ENCODE measurements at regions of chr6 and their contacts with region 1.

Region 1: DNA sequence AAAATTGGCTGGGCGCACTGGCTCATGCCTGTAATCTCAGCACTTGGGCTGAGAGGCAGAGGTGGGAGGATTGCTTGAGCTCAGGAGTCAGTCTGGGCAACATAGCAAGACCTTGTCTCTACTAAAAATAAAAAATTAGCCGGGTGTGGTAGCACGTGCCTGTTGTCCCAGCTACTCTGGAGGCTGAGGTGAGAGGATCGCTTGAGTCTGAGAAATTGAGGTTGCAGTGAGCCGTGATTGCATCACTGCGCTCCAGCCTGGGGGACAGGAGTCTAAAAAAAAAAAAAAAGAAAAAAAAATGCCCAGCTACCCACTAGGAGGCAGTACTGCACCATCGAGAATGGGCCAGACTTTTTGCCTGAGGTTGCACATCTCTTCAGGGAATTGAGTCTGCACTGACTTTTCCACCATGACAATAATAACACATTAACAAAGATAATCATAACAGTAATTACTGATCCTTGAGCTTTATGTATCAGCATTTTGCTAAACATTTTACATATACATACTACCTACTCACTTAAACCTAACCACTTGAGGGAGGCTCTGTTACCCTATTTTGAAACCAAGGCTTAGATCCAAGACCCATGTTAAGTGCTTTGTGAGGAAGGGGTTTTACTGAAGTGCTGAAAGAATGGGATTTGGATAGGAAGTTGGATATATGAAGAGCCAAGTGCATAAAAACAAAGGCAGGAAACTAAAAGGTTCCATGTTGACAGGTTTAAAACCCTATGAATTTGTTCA is 21.0 kb downstream of the SRSF3 start:
- DNase-seq: peak; percentile 40 to 60
- ATAC-seq: peak; percentile 9 to 15; a peak in 2 of 6 replicates
- H3K4me3 ChIP-seq: no peak overlapping the region
- H3K27ac ChIP-seq: peak overlapping the region; percentile 76 to 79
- H3K4me1 ChIP-seq: peaks cover 47% of the 10 kb centered on the region
- CTCF ChIP-seq: peak; percentile 78
- EP300 ChIP-seq: no peak
- POLR2A ChIP-seq: no peak
- RAD21 ChIP-seq: peak; percentile 78 to 80

Region 2: GRCh38 chr6:36678518-36679027 is 63.4 kb after region 1 on chr6 and contains the start of gene CDKN1A:
- CTCF ChIA-PET with region 1: interaction called, 123 read pairs
- POLR2A ChIA-PET with region 1: interaction called, 5 read pairs
- DNase-seq: peak; percentile 66 to 86
- ATAC-seq: peak; percentile 77 to 89
- H3K4me3 ChIP-seq: peak within 1 kb of the TSS; percentile 86
- H3K27ac ChIP-seq: peak within 1 kb of the TSS; percentile 86 to 94
- H3K4me1 ChIP-seq: peaks cover 50% of the 10 kb centered on the region
- CTCF ChIP-seq: no peak
- EP300 ChIP-seq: peak in 1 of 2 experiments; percentile 12; a peak in 1 of 5 replicates
- POLR2A ChIP-seq: peak; percentile 98
- RAD21 ChIP-seq: 0 out of 5 replicates have a peak, but pooled peaks of 1 of the 2 experiments have one; percentile 17
- polyA plus RNA-seq, gene CDKN1A: 183 and 192 TPM in 2 replicates

Region 3: GRCh38 chr6:36691612-36692011 is 76.4 kb after region 1 on chr6:
- CTCF ChIA-PET with region 1: interaction called, 123 read pairs
- POLR2A ChIA-PET with region 1: interaction called, 3 read pairs
- DNase-seq: no peak
- ATAC-seq: no peak; a peak in 1 of 6 replicates
- H3K4me3 ChIP-seq: no peak overlapping the region
- H3K27ac ChIP-seq: no peak overlapping the region
- H3K4me1 ChIP-seq: no peaks in the 10 kb centered on the region
- CTCF ChIP-seq: no peak
- EP300 ChIP-seq: no peak
- POLR2A ChIP-seq: no peak
- RAD21 ChIP-seq: no peak

Region 4: DNA sequence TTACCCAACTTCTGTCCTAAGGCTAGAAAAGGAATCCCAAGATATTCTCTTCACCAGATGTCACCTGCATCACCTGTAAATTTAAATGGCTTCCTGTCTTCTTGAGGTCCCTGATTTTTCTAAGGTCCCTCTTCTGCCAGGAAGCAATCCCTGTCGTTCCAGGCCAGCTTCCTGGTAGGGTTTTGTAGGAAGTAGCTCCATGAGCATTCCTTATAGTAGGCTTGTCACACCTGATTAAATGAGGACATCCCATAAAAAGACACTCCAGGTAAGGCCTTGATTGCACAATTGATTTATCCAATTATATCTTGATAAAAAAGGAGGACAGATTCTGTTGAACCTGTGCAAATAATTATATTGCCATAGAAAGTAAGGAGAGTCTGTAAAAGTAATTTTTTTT is 91.1 kb after region 1 on chr6:
- CTCF ChIA-PET with region 1: interaction called, 11 read pairs
- POLR2A ChIA-PET with region 1: no interaction called
- DNase-seq: no peak
- ATAC-seq: no peak
- H3K4me3 ChIP-seq: no peak overlapping the region
- H3K27ac ChIP-seq: no peak overlapping the region
- H3K4me1 ChIP-seq: peaks cover 4% of the 10 kb centered on the region; the same call in 1 of the 3 replicates
- CTCF ChIP-seq: no peak
- EP300 ChIP-seq: no peak
- POLR2A ChIP-seq: no peak
- RAD21 ChIP-seq: no peak

Region 5: GRCh38 chr6:36724514-36725390 is 109.6 kb after region 1 on chr6:
- CTCF ChIA-PET with region 1: interaction called, 56 read pairs
- POLR2A ChIA-PET with region 1: no interaction called
- DNase-seq: peak; percentile 70 to 72
- ATAC-seq: peak; percentile 78 to 92
- H3K4me3 ChIP-seq: no peak overlapping the region
- H3K27ac ChIP-seq: no peak overlapping the region
- H3K4me1 ChIP-seq: no peaks in the 10 kb centered on the region
- CTCF ChIP-seq: peak; percentile 68
- EP300 ChIP-seq: no peak
- POLR2A ChIP-seq: no peak
- RAD21 ChIP-seq: peak; percentile 76 to 82

Region 6: GRCh38 chr6:36752886-36753506 is 137.8 kb after region 1 on chr6:
- CTCF ChIA-PET with region 1: interaction called, 50 read pairs
- POLR2A ChIA-PET with region 1: no interaction called
- DNase-seq: no peak
- ATAC-seq: no peak; a peak in 1 of 6 replicates
- H3K4me3 ChIP-seq: no peak overlapping the region
- H3K27ac ChIP-seq: 0 out of 6 replicates have a peak overlapping the region, but pooled peaks of 1 of the 2 experiments have one; percentile 19
- H3K4me1 ChIP-seq: peaks cover 16% of the 10 kb centered on the region; the same call in 2 of the 3 replicates
- CTCF ChIP-seq: no peak
- EP300 ChIP-seq: no peak
- POLR2A ChIP-seq: no peak
- RAD21 ChIP-seq: no peak

Region 7: GRCh38 chr6:36786055-36786675 is 171.0 kb after region 1 on chr6:
- CTCF ChIA-PET with region 1: interaction called, 12 read pairs
- POLR2A ChIA-PET with region 1: no interaction called
- DNase-seq: no peak
- ATAC-seq: peak in 1 of 2 experiments; percentile 42; a peak in 1 of 6 replicates
- H3K4me3 ChIP-seq: no peak overlapping the region
- H3K27ac ChIP-seq: no peak overlapping the region
- H3K4me1 ChIP-seq: no peaks in the 10 kb centered on the region
- CTCF ChIP-seq: no peak
- EP300 ChIP-seq: no peak
- POLR2A ChIP-seq: no peak
- RAD21 ChIP-seq: no peak